Activated naive CD4-positive, alpha-beta T cell treated with anti-CD3 and anti-CD28 coated beads for 36 hours (primary cell): ENCODE measurements at regions of chr10 and their contacts with region 1.

Region 1: DNA sequence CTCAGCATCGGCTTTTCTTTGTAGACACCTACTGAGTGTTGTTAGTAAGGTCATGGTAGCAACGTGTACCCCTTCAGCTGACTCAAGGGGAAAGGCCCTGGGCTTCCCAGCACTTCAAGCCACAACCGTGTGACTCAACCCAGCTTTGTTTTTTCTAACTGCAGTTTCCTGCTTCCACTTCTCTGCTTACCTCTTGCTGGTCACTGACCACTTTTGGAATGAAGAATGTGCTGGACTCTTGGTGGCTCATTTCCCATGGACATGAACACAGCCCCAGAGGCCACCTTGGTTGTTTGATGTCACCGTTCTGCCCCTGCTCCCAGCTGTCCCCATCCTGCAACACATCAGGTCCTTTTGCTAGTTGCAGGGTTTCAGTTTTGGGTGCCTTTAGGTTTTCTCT is 69.5 kb upstream of the ZNF438 start:
- DNase-seq: peak; percentile 91
- H3K4me3 Mint-ChIP-seq: peak overlapping the region; percentile 50
- H3K27ac Mint-ChIP-seq: peak overlapping the region; percentile 85
- H3K4me1 Mint-ChIP-seq: peaks cover 44% of the 10 kb centered on the region
- H3K27me3 Mint-ChIP-seq: no peaks in the 10 kb centered on the region

Region 2: GRCh38 chr10:30709229-30709628 is 391.9 kb before region 1 on chr10:
- CTCF ChIA-PET with region 1: no interaction called
- intact Hi-C with region 1: no loop called
- DNase-seq: peak; percentile 30
- H3K4me3 Mint-ChIP-seq: no peak overlapping the region
- H3K27ac Mint-ChIP-seq: no peak overlapping the region
- H3K4me1 Mint-ChIP-seq: peaks cover 23% of the 10 kb centered on the region
- H3K27me3 Mint-ChIP-seq: no peaks in the 10 kb centered on the region

Region 3: GRCh38 chr10:31083765-31084184 is 17.3 kb before region 1 on chr10:
- CTCF ChIA-PET with region 1: interaction called, 15 read pairs
- intact Hi-C with region 1: no loop called
- DNase-seq: peak; percentile 86
- H3K4me3 Mint-ChIP-seq: no peak overlapping the region
- H3K27ac Mint-ChIP-seq: peak overlapping the region; percentile 54
- H3K4me1 Mint-ChIP-seq: peaks cover 6% of the 10 kb centered on the region
- H3K27me3 Mint-ChIP-seq: no peaks in the 10 kb centered on the region

Region 4: GRCh38 chr10:31133628-31134302 is 32.6 kb after region 1 on chr10:
- CTCF ChIA-PET with region 1: interaction called, 6 read pairs
- intact Hi-C with region 1: loop called (anchors 1 kb)
- DNase-seq: peak; percentile 76
- H3K4me3 Mint-ChIP-seq: peak overlapping the region; percentile 68
- H3K27ac Mint-ChIP-seq: no peak overlapping the region
- H3K4me1 Mint-ChIP-seq: peaks cover 37% of the 10 kb centered on the region
- H3K27me3 Mint-ChIP-seq: no peaks in the 10 kb centered on the region

Region 5: DNA sequence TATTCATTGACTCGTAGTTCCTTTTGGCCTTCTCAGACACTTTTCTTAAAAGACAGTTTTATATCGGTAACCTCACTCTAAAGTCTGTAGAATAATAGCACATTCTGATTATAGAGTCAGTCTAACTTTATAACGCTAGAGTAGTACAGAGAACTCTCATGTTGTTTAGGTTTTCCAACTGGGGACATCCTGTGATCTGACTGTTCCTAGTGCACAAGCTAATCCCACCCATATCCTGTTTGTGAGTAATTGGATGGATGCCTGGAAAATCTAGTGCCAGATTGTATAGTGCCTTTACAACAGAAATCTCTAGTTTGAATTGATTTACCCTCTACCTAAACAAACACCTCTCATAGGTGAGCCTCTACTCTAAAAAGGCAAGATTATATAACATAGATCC is 325.3 kb after region 1 on chr10:
- CTCF ChIA-PET with region 1: no interaction called
- intact Hi-C with region 1: loop called (anchors 1 kb)
- DNase-seq: no peak
- H3K4me3 Mint-ChIP-seq: no peak overlapping the region
- H3K27ac Mint-ChIP-seq: no peak overlapping the region
- H3K4me1 Mint-ChIP-seq: peaks cover 54% of the 10 kb centered on the region
- H3K27me3 Mint-ChIP-seq: no peaks in the 10 kb centered on the region

Region 6: DNA sequence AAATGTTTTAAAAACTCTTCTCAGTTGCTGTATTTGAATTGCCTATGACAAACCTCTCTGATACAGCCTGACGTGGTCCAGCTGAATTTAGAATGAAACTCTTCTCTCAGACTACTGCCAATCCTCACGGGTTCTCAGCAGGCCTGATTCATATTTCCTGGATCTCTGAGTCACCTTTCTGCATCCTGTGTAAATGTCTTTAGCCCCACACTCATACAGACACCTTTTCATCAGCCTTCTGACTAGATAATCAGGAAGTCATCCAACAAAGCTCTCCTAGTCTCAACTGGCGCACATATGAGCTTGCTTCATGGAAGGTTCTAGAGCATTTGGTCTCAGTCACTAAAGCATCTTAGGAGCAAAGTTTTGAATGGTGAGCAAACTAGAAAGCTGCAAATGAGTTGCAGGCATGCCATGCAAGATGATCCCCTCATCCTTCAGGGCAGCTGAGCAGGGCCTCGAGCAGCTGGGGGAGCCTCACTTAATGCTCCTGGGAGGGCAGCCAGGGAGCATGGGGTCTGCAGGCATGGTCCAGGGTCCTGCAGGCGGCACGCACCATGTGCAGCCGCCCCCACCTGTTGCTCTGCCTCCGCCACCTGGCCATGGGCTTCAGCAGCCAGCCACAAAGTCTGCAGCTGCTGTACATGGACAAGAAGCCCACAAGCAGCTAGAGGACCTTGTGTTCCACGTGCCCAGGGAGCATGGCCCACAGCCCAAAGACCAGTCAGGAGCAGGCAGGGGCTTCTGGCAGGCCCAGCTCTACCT is 644.7 kb after region 1 on chr10:
- CTCF ChIA-PET with region 1: interaction called, 3 read pairs
- intact Hi-C with region 1: loop called (anchors 1 kb)
- DNase-seq: peak; percentile 84
- H3K4me3 Mint-ChIP-seq: no peak overlapping the region
- H3K27ac Mint-ChIP-seq: peak overlapping the region; percentile 95
- H3K4me1 Mint-ChIP-seq: peaks cover 47% of the 10 kb centered on the region
- H3K27me3 Mint-ChIP-seq: no peaks in the 10 kb centered on the region